GM12878 (cell line): ENCODE measurements at regions of chr16 and their contacts with region 1.

Region 1: DNA sequence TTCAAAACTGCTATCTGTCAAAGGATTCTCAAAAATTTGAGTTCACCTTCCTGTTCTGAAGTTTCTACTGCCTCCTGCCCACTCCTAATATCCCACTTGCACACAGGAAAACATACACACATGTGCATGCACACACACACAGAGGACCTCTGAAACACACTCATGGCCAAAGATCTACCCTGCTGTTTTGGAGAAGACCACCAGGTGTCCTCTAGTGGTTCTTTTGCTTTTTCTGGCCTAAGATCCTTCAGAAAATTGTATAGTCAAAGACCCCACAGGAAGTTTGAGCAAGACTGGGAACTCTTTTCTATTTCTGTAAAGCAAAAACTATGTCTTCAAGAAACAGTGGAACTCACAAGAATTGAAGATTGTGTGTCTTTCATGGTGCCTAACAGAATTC is 90.2 kb downstream of the CDH8 start:
- DNase-seq: no peak
- ATAC-seq: no peak; the same call in 2 of the 3 replicates
- H3K4me3 ChIP-seq: no peak overlapping the region
- H3K27ac ChIP-seq: no peak overlapping the region
- H3K4me1 ChIP-seq: no peaks in the 10 kb centered on the region
- H3K27me3 ChIP-seq: no peaks in the 10 kb centered on the region
- CTCF ChIP-seq: no peak
- EP300 ChIP-seq: no peak
- POLR2A ChIP-seq: no peak
- RAD21 ChIP-seq: peak; percentile 14; the same call in 1 of the 2 replicates

Region 2: GRCh38 chr16:61165797-61166196 is 780.2 kb before region 1 on chr16:
- CTCF ChIA-PET with region 1: no interaction called
- POLR2A ChIA-PET with region 1: no interaction called
- RAD21 ChIA-PET with region 1: no interaction called
- SMC1A ChIA-PET with region 1: no interaction called
- in situ Hi-C with region 1: no loop called
- intact Hi-C with region 1: no loop called
- DNase-seq: no peak
- ATAC-seq: no peak
- H3K4me3 ChIP-seq: no peak overlapping the region
- H3K27ac ChIP-seq: no peak overlapping the region
- H3K4me1 ChIP-seq: no peaks in the 10 kb centered on the region
- H3K27me3 ChIP-seq: no peaks in the 10 kb centered on the region
- CTCF ChIP-seq: no peak
- EP300 ChIP-seq: no peak
- POLR2A ChIP-seq: no peak
- RAD21 ChIP-seq: no peak

Region 3: GRCh38 chr16:62041401-62041800 is 95.4 kb after region 1 on chr16:
- CTCF ChIA-PET with region 1: no interaction called
- POLR2A ChIA-PET with region 1: interaction called, 5 read pairs
- RAD21 ChIA-PET with region 1: no interaction called
- SMC1A ChIA-PET with region 1: no interaction called
- in situ Hi-C with region 1: no loop called
- intact Hi-C with region 1: loop called (anchors 5 kb)
- DNase-seq: no peak
- ATAC-seq: peak; percentile 79
- H3K4me3 ChIP-seq: no peak overlapping the region
- H3K27ac ChIP-seq: no peak overlapping the region
- H3K4me1 ChIP-seq: no peaks in the 10 kb centered on the region
- H3K27me3 ChIP-seq: no peaks in the 10 kb centered on the region
- CTCF ChIP-seq: peak; percentile 24 to 39 (median 36); a peak in 4 of 6 replicates
- EP300 ChIP-seq: no peak
- POLR2A ChIP-seq: no peak
- RAD21 ChIP-seq: peak; percentile 68